ENCODE measurements at regions of chr6 and their contacts with region 1.

Region 1: DNA sequence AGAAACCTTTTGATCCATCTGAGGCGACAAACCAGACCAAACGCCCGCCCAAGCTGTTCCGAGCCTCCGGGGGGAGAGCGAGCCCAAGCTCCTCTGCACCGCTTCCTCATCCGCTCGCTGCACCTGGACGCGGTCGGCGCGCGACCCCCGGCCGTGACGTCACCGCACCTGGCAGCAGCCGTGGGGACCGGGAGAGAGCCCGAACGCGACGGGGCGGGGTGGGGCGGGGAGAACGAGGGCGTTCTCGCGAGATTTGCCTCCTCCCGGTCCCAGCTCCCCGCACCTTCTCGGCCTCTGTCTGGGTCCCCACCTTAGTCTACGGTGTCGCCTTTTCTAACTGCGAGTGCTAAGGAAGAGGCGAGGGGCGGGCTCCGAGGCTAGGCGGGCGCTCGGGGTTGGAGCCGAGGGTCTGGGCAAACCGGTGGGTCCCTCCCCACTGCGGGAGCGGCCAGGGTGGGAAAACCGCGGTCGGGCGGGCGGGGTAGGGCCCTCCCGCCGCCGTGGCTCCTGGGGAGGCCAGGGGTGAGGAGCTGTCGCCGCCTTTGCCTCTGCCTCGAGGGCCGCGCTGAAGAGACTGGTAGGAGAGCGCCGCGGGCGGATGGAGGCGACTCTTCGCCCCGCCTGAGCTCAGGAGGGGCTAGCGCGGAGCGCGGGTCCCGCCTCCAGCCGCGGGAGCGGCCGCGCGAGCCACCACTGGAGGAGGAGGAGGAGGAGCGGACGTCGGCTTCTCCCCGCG is at the start of gene CD2AP:
- DNase-seq: peak; percentile 85 to 92 (median 88)
- ATAC-seq: peak; percentile 86 to 97 (median 95)
- H3K4me3 ChIP-seq: peak within 1 kb of the TSS; percentile 66 to 95 (median 86)
- H3K27ac ChIP-seq: peak within 1 kb of the TSS; percentile 87 to 98 (median 94)
- H3K4me1 ChIP-seq: peaks cover 0 to 31% (median 16%) of the 10 kb centered on the region in 12 donors
- H3K27me3 ChIP-seq: no peaks in the 10 kb centered on the region
- CTCF ChIP-seq: peak in 6 of 12 donors; percentile 15 to 41 (median 29)
- POLR2A ChIP-seq: peak in 1 of 2 donors; percentile 62
- total RNA-seq, gene CD2AP: 9.7 to 18.0 (median 13.7) TPM

Region 2: DNA sequence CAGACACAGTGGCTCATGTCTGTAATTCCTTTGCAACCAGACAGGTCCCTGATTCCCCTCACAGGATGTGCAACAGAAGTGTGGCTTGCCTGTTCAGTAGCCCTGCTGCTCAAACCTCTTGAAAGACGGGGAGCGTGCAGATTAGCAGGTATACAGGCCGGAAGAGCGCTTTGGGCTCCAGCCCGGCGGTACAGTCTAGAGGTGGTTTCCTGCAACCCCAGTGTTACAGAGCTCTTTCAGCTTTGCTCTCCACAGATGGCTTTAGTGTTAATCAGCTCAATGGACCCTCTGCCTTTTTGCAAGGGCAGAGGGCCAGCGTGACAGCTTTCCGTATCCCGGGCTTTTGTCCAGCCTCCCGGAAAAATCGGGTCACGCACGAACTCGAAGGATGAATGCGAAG is 100.7 kb before region 1 on chr6:
- intact Hi-C with region 1: no loop called
- DNase-seq: no peak
- ATAC-seq: no peak
- H3K4me3 ChIP-seq: no peak overlapping the region
- H3K27ac ChIP-seq: no peak overlapping the region
- H3K4me1 ChIP-seq: no peaks in the 10 kb centered on the region
- H3K27me3 ChIP-seq: no peaks in the 10 kb centered on the region
- CTCF ChIP-seq: no peak
- POLR2A ChIP-seq: no peak

Region 3: GRCh38 chr6:47420394-47421371 is 57.0 kb before region 1 on chr6:
- intact Hi-C with region 1: loop called in 6 of 10 experiments (anchors 2 to 10 kb)
- DNase-seq: no peak
- ATAC-seq: peak in 1 of 4 donors; percentile 73
- H3K4me3 ChIP-seq: no peak overlapping the region
- H3K27ac ChIP-seq: peak overlapping the region in 2 of 12 donors; percentile 45 to 50
- H3K4me1 ChIP-seq: peaks cover 0 to 15% (median 4%) of the 10 kb centered on the region in 12 donors
- H3K27me3 ChIP-seq: no peaks in the 10 kb centered on the region
- CTCF ChIP-seq: no peak
- POLR2A ChIP-seq: no peak

Region 4: GRCh38 chr6:47535316-47536225 is 57.9 kb after region 1 on chr6:
- intact Hi-C with region 1: loop called in 1 of 10 experiments (anchors 2 kb)
- DNase-seq: no peak
- ATAC-seq: no peak
- H3K4me3 ChIP-seq: no peak overlapping the region
- H3K27ac ChIP-seq: peak overlapping the region in 4 of 12 donors; percentile 0 to 17 (median 2)
- H3K4me1 ChIP-seq: peaks cover 0 to 20% (median 7%) of the 10 kb centered on the region in 12 donors
- H3K27me3 ChIP-seq: no peaks in the 10 kb centered on the region
- CTCF ChIP-seq: no peak
- POLR2A ChIP-seq: no peak

Region 5: DNA sequence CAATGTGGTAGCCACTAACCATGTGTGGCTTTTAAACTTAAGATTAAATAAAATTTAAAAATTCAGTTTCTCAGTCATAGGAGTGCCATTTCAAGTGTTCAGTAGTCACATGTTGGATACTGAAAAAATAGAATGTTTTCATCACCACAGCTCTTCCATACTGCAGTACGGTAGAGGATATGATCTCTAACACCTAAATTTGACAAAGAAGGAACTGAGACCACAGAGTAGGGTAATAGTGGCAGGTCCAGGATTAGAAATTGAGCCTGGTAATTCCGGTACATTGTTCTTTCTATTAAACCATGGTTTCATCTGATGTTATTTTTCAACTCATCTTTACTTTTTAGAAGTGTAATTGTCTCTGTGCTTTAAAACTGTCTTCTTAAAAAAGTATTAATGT is 103.9 kb after region 1 on chr6:
- intact Hi-C with region 1: no loop called
- DNase-seq: no peak
- ATAC-seq: no peak
- H3K4me3 ChIP-seq: no peak overlapping the region
- H3K27ac ChIP-seq: no peak overlapping the region
- H3K4me1 ChIP-seq: no peaks in the 10 kb centered on the region
- H3K27me3 ChIP-seq: no peaks in the 10 kb centered on the region
- CTCF ChIP-seq: no peak
- POLR2A ChIP-seq: no peak

Region 6: DNA sequence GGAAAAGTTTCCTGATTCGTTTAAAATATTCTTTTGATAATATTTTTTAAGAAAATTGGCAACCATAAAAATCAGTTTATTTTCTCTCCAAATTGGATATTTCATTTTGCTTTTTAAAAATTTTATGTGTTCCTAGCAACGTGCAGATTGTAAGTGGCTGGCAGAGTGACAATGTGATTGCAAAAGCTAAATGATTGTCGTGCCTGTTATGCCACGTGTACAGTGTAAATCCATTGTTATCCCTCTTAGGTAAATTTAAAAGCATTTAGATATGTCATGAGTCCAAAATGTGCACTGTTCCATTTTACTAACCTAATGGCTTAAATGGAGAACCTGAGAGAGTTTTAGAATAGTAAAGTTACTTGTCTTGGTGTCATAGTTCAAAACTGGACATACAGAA is 126.3 kb after region 1 on chr6:
- intact Hi-C with region 1: loop called in 2 of 10 experiments (anchors 5 to 10 kb)
- DNase-seq: no peak
- ATAC-seq: peak in 1 of 4 donors; percentile 37
- H3K4me3 ChIP-seq: no peak overlapping the region
- H3K27ac ChIP-seq: no peak overlapping the region
- H3K4me1 ChIP-seq: peaks cover 0 to 17% (median 3%) of the 10 kb centered on the region in 12 donors
- H3K27me3 ChIP-seq: no peaks in the 10 kb centered on the region
- CTCF ChIP-seq: no peak
- POLR2A ChIP-seq: no peak